ENCODE measurements at regions of chr21 and their contacts with region 1.

Region 1: DNA sequence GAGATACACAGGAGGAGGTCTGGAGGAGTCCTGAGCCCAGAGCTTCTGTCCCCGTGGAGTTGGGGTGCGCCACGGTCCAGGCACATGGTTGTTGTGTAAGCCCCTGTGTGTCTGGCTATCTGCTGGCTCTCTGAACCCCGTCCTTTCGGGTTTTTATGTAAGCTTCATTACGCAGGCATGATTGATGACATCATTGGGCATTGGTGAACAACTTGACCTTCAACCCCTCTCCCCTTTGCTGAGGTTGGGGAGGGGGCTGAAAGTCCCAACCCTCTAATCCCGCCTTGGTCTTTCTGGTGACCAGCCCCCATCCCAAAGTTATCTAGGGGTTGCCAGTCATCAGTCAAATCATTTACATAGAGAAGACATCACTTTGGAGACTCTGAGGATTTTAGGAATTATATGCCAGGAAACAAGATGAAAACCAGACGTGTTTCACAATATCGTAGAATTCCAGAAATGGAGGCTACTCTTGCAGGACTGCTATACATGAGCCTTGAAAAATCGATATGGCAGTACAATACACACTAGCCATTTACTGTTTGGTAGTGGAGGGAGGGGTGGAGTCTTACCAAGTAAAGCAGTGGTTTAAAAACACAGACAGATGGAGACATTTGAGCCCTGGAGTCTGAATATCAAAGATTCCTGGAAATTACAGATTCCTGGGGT is 69.8 kb upstream of the SCAF4 start:
- DNase-seq: no peak

Region 2: GRCh38 chr21:31580866-31581276 is 220.8 kb before region 1 on chr21:
- intact Hi-C with region 1: no loop called
- DNase-seq: peak; percentile 21 to 92 (median 80)

Region 3: GRCh38 chr21:31844206-31844605 is 42.5 kb after region 1 on chr21:
- intact Hi-C with region 1: no loop called
- DNase-seq: no peak

Region 4: DNA sequence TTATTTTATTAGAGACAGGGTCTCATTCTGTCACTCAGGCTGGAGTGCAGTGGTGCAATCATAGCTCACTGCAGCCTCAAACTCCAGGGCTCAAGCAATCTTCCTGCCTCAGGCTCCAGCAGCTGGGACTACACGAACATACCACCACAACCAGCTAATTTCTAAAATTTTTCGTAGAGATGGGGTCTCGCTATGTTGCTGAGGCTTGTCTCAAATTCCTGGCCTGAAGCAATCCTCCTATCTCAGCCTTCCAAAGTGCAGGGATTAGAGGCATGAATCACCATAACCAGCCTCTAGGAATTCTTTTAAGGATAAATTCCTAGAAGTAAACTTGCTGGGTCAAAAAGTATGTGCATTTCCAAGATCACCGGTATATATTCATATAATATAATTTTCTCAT is 53.5 kb after region 1 on chr21:
- intact Hi-C with region 1: loop called (anchors 10 kb)
- DNase-seq: peak in 1 of 42 donors; percentile 18